PC-3 (cell line): ENCODE measurements at regions of chr2 and their contacts with region 1.

Region 1: GRCh38 chr2:191985740-191986139 is 138.9 kb upstream of the CAVIN2 start:
- DNase-seq: no peak
- ATAC-seq: no peak
- H3K4me3 ChIP-seq: no peak overlapping the region
- H3K27ac ChIP-seq: no peak overlapping the region
- H3K4me1 ChIP-seq: no peaks in the 10 kb centered on the region
- H3K27me3 ChIP-seq: no peaks in the 10 kb centered on the region
- CTCF ChIP-seq: no peak

Region 2: GRCh38 chr2:191910518-191910917 is 75.2 kb before region 1 on chr2:
- CTCF ChIA-PET with region 1: no interaction called
- POLR2A ChIA-PET with region 1: no interaction called
- intact Hi-C with region 1: no loop called
- DNase-seq: peak; percentile 64
- ATAC-seq: peak; percentile 69
- H3K4me3 ChIP-seq: no peak overlapping the region
- H3K27ac ChIP-seq: peak overlapping the region; percentile 24
- H3K4me1 ChIP-seq: peaks cover 16% of the 10 kb centered on the region
- H3K27me3 ChIP-seq: no peaks in the 10 kb centered on the region
- CTCF ChIP-seq: no peak

Region 3: DNA sequence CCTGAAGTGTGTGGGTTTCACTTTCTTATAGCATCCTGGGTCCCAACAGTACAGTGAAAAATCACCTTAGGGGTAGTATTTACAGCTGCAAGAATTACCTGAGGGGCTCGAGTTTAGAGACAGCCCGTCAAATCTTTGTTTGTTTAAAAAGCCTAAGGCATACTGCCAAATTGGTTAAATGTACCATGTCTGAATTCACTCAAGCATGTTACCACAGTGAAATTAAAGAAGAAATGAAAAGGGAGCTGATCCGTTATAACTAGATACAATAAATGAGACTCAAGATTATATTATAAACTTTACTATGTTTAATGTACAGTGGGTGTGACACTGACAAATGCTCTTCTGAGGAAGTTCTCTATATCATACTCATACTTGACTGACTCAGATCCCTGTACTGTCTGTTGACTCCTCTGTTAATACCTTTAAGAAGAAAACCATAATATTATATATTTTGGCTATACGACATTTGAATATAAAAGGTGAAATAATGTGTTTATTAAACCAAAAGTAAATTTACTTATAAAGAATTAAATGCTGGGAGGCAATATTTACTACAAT is 101.7 kb after region 1 on chr2:
- CTCF ChIA-PET with region 1: interaction called, 15 read pairs
- POLR2A ChIA-PET with region 1: no interaction called
- intact Hi-C with region 1: no loop called
- DNase-seq: peak; percentile 26
- ATAC-seq: peak; percentile 99
- H3K4me3 ChIP-seq: no peak overlapping the region
- H3K27ac ChIP-seq: no peak overlapping the region
- H3K4me1 ChIP-seq: 0 out of 2 replicates have a peak, but pooled peaks cover 4% of the 10 kb centered on the region
- H3K27me3 ChIP-seq: 0 out of 2 replicates have a peak, but pooled peaks cover 2% of the 10 kb centered on the region
- CTCF ChIP-seq: no peak